ENCODE measurements at regions of chr4 and their contacts with region 1.

Region 1: GRCh38 chr4:167021545-167022155 is 212.6 kb downstream of the SPOCK3 start:
- DNase-seq: peak; percentile 65 to 81 (median 70)
- ATAC-seq: peak; percentile 58
- H3K4me3 ChIP-seq: no peak overlapping the region
- H3K27ac ChIP-seq: no peak overlapping the region
- H3K4me1 ChIP-seq: no peaks in the 10 kb centered on the region
- H3K27me3 ChIP-seq: no peaks in the 10 kb centered on the region
- CTCF ChIP-seq: peak; percentile 46 to 80 (median 73)
- POLR2A ChIP-seq: no peak

Region 2: GRCh38 chr4:168076989-168077725 is 1055.5 kb after region 1 on chr4:
- intact Hi-C with region 1: loop called (anchors 10 kb)
- DNase-seq: peak; percentile 68 to 78 (median 74)
- ATAC-seq: peak; percentile 83
- H3K4me3 ChIP-seq: no peak overlapping the region
- H3K27ac ChIP-seq: no peak overlapping the region
- H3K4me1 ChIP-seq: no peaks in the 10 kb centered on the region
- H3K27me3 ChIP-seq: no peaks in the 10 kb centered on the region
- CTCF ChIP-seq: peak; percentile 78 to 91 (median 82)
- POLR2A ChIP-seq: no peak